Activated naive CD4-positive, alpha-beta T cell treated with anti-CD3 and anti-CD28 coated beads for 36 hours (primary cell): ENCODE measurements at regions of chr1 and their contacts with region 1.

Region 1: DNA sequence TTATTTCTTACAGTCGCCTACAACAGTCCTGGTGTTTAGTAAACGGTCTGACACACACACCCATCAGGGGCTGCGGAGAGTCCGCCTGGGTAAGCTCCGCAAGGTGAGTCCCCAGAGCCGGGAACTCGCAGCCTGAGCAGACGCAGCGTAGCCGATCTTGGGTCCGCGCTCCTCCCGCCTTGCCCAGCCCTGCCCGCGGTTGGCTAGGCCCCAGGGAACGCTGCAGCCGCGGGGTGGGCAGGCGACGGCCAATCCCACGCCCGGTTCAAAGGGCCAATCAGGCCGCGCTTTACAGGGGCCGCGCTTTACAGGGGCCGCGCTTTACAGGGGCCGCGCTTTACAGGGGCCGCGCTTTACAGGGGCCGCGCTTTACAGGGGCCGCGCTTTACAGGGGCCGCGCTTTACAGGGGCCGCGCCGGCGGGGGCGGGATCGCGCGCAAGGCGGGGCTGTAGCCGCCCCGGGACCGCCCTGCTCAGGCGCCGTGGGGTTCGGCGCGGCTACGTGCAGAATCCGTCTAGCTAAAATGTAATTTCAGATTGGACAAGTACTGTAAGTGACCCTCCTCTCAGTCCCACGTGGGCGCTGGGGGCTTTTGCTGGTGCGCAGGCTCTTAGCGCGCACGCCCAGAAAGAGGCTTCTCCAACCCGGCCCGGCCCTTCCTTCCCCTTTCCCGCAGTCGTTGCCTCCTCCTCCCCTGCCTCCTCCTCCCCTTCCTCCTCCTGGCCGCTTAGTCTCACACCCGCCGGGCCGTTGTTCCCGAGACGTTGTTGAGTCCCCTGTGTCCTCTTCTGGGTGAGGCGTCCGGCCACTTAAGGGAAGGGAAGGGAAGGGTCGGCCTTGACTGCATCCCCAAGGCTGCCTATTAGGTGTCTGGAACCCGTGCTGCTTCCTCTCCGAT is at the start of gene FGGY:
- DNase-seq: peak; percentile 90
- H3K4me3 Mint-ChIP-seq: peak within 1 kb of the TSS; percentile 86
- H3K27ac Mint-ChIP-seq: peak within 1 kb of the TSS; percentile 79
- H3K4me1 Mint-ChIP-seq: peaks cover 16% of the 10 kb centered on the region
- H3K27me3 Mint-ChIP-seq: no peaks in the 10 kb centered on the region
- total RNA-seq, gene FGGY: 9.8 to 10.9 TPM

Region 2: DNA sequence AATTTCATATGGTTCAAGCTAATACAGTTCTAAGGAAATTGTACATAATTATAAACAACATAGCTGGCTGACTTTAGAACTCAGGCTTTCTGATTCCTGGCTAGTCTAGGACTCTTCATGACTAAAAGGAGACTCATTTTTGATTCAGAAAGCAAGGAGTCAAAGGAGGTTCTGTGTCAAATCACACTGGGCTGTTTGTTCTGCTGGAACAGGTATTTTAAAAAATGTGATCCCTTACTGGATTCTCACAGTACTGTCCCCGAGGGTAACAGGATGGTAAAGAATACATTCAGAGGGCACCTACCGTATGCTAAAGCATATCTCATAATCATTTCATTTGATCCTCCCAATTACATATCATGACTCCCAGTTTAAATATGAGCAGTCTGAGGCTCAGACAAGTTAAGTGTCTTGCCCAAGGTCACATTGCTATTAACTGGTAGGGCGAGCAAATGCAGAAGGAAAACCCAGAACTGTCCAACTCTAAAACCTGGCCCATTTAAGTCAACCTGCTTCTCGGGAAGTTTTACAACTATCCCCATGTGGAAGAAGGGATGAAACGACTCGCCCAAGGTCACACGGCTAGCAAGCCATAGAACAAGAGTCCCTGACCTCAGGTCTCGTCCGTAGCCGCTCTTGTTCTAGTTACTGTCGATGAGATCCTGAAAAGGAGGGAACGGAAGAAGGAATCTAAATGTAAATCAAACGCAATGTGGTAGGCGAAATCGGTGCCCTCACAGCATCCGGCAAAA is 597.4 kb before region 1 on chr1:
- CTCF ChIA-PET with region 1: no interaction called
- intact Hi-C with region 1: loop called (anchors 1 kb)
- DNase-seq: peak; percentile 17
- H3K4me3 Mint-ChIP-seq: peak overlapping the region; percentile 96
- H3K27ac Mint-ChIP-seq: peak overlapping the region; percentile 91
- H3K4me1 Mint-ChIP-seq: peaks cover 19% of the 10 kb centered on the region
- H3K27me3 Mint-ChIP-seq: no peaks in the 10 kb centered on the region

Region 3: DNA sequence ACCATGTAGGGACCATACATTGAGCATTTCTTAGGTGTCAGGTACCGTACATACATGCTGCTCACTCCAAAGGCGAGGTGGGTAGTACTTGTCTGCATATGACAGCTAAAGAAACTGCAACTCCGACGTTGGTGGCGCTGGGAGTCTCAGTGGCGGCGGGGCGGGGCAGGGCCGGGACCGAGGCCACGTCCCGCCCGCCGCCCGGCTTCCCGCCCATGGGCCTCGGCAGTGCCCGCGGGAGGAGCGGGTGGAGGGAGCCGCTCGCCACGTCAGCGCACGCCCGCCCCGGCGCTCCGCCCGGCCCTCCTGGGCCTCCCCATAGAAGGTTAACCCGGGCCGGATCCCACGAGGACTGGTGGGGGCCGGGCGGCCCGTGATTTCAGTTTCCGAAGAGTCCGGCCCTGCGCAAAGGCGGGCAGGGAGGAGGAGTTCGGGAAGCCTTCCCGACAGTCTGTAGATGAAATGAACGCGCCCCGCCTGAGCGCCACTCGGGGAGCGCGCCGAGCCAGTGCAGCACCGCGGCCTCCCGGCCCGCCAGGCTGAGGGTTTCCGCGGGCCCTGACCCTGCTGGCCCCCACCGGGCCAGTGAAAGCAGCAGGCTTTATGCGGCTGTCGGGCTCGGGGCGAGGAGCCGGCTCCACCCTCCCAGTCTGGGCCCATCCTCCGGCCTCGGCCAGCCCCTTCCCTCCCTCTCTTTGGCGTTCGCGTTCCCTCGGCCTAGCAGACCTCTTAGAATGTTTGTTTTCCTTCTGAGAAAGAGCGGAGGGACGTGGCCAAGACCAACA is 392.9 kb before region 1 on chr1:
- CTCF ChIA-PET with region 1: no interaction called
- intact Hi-C with region 1: loop called (anchors 1 kb)
- DNase-seq: peak; percentile 90
- H3K4me3 Mint-ChIP-seq: peak overlapping the region; percentile 71
- H3K27ac Mint-ChIP-seq: peak overlapping the region; percentile 43
- H3K4me1 Mint-ChIP-seq: peaks cover 8% of the 10 kb centered on the region
- H3K27me3 Mint-ChIP-seq: no peaks in the 10 kb centered on the region

Region 4: DNA sequence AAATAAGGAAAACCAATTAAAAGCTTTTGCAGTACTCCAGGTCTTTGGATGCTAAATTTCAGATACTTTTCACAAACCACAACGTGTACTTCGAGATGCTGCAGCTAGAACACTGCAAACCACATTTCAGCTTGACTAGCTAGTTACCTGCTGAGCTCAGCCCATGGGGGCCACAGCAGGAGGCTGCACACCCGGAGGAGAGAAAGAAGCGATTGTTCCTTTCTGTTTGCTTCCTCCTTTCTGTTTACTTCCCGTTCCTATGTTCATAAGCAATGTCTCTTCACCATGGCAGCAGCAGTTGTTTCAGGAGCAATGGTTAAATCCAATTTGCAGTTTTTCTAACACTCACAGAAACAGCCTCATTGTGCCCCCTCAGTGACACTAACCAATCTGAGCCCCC is 225.3 kb before region 1 on chr1:
- CTCF ChIA-PET with region 1: no interaction called
- intact Hi-C with region 1: loop called (anchors 1 kb)
- DNase-seq: peak; percentile 19
- H3K4me3 Mint-ChIP-seq: peak overlapping the region; percentile 37
- H3K27ac Mint-ChIP-seq: peak overlapping the region; percentile 82
- H3K4me1 Mint-ChIP-seq: peaks cover 23% of the 10 kb centered on the region
- H3K27me3 Mint-ChIP-seq: no peaks in the 10 kb centered on the region

Region 5: GRCh38 chr1:59285691-59286090 is 10.9 kb before region 1 on chr1:
- CTCF ChIA-PET with region 1: no interaction called
- intact Hi-C with region 1: no loop called
- DNase-seq: no peak
- H3K4me3 Mint-ChIP-seq: no peak overlapping the region
- H3K27ac Mint-ChIP-seq: no peak overlapping the region
- H3K4me1 Mint-ChIP-seq: no peaks in the 10 kb centered on the region
- H3K27me3 Mint-ChIP-seq: no peaks in the 10 kb centered on the region

Region 6: DNA sequence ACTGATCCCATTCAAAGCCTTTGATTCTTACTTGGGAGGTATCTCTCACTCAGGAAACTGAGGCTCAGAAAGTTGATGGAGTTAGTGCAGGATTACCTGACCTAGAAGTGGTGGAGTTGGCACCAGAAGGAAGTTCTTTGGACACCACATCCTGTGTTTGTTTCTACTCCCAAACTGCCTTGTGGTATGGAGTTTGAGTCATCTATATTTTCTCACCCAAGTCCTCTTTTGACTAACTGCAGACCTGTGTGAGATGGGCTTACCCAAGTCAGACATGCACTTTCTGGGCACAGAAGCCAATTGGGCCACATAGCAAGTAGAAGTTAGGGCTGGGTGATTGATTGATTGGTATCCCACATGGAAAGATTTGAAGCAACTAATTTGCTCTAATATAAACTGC is 36.4 kb after region 1 on chr1:
- CTCF ChIA-PET with region 1: no interaction called
- intact Hi-C with region 1: loop called (anchors 2 kb)
- DNase-seq: peak; percentile 54
- H3K4me3 Mint-ChIP-seq: no peak overlapping the region
- H3K27ac Mint-ChIP-seq: no peak overlapping the region
- H3K4me1 Mint-ChIP-seq: peaks cover 26% of the 10 kb centered on the region
- H3K27me3 Mint-ChIP-seq: no peaks in the 10 kb centered on the region

Region 7: GRCh38 chr1:59814180-59814900 is 517.7 kb after region 1 on chr1:
- CTCF ChIA-PET with region 1: no interaction called
- intact Hi-C with region 1: loop called (anchors 1 kb)
- DNase-seq: peak; percentile 93
- H3K4me3 Mint-ChIP-seq: no peak overlapping the region
- H3K27ac Mint-ChIP-seq: peak overlapping the region; percentile 78
- H3K4me1 Mint-ChIP-seq: peaks cover 3% of the 10 kb centered on the region
- H3K27me3 Mint-ChIP-seq: peaks cover 8% of the 10 kb centered on the region